CD8-positive, alpha-beta T cell (primary cell): ENCODE measurements at regions of chr10 and their contacts with region 1.

Region 1: GRCh38 chr10:62244780-62245467 is 23.7 kb downstream of the RTKN2 start:
- DNase-seq: peak in 8 of 9 experiments; percentile 10 to 80 (median 45)
- ATAC-seq: peak; percentile 88
- H3K4me3 ChIP-seq: no peak overlapping the region
- H3K4me3 Mint-ChIP-seq: no peak overlapping the region
- H3K27ac ChIP-seq: no peak overlapping the region
- H3K27ac Mint-ChIP-seq: no peak overlapping the region
- H3K4me1 ChIP-seq: peaks cover 4% of the 10 kb centered on the region
- H3K4me1 Mint-ChIP-seq: peaks cover 17% of the 10 kb centered on the region
- H3K27me3 ChIP-seq: no peaks in the 10 kb centered on the region
- H3K27me3 Mint-ChIP-seq: no peaks in the 10 kb centered on the region
- CTCF ChIP-seq: peak; percentile 90

Region 2: DNA sequence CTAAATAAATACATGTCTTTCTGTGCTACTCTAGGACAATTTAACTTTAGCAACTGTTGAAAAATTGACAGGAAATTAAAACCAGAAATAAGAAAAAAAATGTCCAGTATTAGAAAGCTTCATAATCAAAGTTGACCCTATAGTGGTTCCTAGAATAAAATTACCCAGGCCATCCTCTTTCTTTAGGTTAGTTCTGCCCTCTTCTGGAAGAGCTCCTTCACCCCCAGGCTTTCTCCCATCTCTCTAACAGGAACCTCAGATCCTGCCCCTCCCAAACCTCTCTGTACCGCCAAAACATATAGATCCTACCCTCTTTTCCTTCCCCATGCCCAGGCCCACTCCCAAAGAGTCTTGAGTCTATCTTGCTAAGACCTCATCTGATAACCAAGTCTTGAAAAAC is 1626.1 kb before region 1 on chr10:
- CTCF ChIA-PET with region 1: no interaction called
- POLR2A ChIA-PET with region 1: no interaction called
- intact Hi-C with region 1: no loop called
- DNase-seq: no peak
- ATAC-seq: no peak
- H3K4me3 ChIP-seq: no peak overlapping the region
- H3K4me3 Mint-ChIP-seq: no peak overlapping the region
- H3K27ac ChIP-seq: no peak overlapping the region
- H3K27ac Mint-ChIP-seq: no peak overlapping the region
- H3K4me1 ChIP-seq: no peaks in the 10 kb centered on the region
- H3K4me1 Mint-ChIP-seq: no peaks in the 10 kb centered on the region
- H3K27me3 ChIP-seq: no peaks in the 10 kb centered on the region
- H3K27me3 Mint-ChIP-seq: no peaks in the 10 kb centered on the region
- CTCF ChIP-seq: no peak

Region 3: GRCh38 chr10:61896854-61897661 is 347.9 kb before region 1 on chr10:
- CTCF ChIA-PET with region 1: interaction called, 60 read pairs
- POLR2A ChIA-PET with region 1: interaction called, 3 read pairs
- intact Hi-C with region 1: loop called (anchors 1 kb)
- DNase-seq: peak in 8 of 9 experiments; percentile 10 to 88 (median 52)
- ATAC-seq: peak; percentile 66
- H3K4me3 ChIP-seq: peak overlapping the region; percentile 6 to 34
- H3K4me3 Mint-ChIP-seq: peak overlapping the region; percentile 83
- H3K27ac ChIP-seq: no peak overlapping the region
- H3K27ac Mint-ChIP-seq: peak overlapping the region; percentile 69
- H3K4me1 ChIP-seq: peaks cover 20% of the 10 kb centered on the region
- H3K4me1 Mint-ChIP-seq: peaks cover 33% of the 10 kb centered on the region
- H3K27me3 ChIP-seq: no peaks in the 10 kb centered on the region
- H3K27me3 Mint-ChIP-seq: no peaks in the 10 kb centered on the region
- CTCF ChIP-seq: peak; percentile 53

Region 4: DNA sequence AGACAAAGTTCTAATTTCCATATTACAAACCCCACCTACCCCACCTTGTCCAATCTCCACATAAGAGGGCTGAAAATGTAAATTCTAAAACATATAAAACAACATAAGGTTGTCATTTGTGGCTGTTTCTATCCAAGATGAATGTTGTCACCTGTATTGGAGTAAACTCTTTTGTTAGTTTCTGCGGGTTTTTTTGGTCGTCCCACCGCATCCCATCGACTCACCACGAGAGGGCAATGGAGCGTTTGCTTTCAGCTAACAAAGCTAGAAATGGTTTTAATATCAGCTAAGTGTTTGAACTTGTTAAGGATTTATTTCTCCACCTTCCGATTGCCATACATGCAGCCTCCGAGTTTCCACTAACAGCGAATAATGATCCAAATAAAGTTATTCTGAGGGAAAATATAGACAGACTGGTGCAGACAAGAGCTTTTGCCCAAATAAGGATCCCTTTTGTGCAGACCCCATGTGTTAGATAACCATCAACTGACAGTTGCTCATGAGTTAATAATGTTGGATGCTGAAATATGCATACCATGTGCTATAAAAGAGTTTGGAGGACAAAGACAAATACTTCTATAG is 206.2 kb before region 1 on chr10:
- CTCF ChIA-PET with region 1: interaction called, 138 read pairs
- POLR2A ChIA-PET with region 1: interaction called, 10 read pairs
- intact Hi-C with region 1: loop called (anchors 1 kb)
- DNase-seq: peak; percentile 53 to 82 (median 73)
- ATAC-seq: peak; percentile 89
- H3K4me3 ChIP-seq: no peak overlapping the region
- H3K4me3 Mint-ChIP-seq: peak overlapping the region; percentile 43
- H3K27ac ChIP-seq: no peak overlapping the region
- H3K27ac Mint-ChIP-seq: no peak overlapping the region
- H3K4me1 ChIP-seq: peaks cover 10% of the 10 kb centered on the region
- H3K4me1 Mint-ChIP-seq: peaks cover 54% of the 10 kb centered on the region
- H3K27me3 ChIP-seq: no peaks in the 10 kb centered on the region
- H3K27me3 Mint-ChIP-seq: no peaks in the 10 kb centered on the region
- CTCF ChIP-seq: peak; percentile 86

Region 5: DNA sequence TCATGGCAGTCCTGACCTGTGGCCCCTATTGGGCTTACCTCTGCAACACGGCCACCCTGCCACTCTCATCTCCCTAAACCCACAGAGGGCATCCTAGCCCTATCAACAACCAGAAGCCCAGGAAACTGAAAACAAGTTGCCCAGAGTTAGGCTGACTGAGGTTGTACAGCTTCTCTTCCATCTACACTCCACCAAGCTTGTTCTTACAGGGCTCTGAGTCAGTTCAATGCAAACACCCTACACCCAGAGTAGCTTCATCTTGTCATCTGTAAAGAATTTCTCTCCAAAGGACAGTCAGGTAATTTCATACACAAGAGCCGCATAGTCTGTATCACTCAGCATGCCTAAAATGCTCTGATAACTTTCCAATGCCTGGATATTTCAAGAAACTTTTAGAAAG is 168.0 kb before region 1 on chr10:
- CTCF ChIA-PET with region 1: interaction called, 9 read pairs
- POLR2A ChIA-PET with region 1: no interaction called
- intact Hi-C with region 1: loop called in 1 of 2 experiments (anchors 1 kb)
- DNase-seq: peak in 1 of 9 experiments; percentile 30
- ATAC-seq: peak; percentile 44
- H3K4me3 ChIP-seq: no peak overlapping the region
- H3K4me3 Mint-ChIP-seq: no peak overlapping the region
- H3K27ac ChIP-seq: no peak overlapping the region
- H3K27ac Mint-ChIP-seq: peak overlapping the region; percentile 66
- H3K4me1 ChIP-seq: peaks cover 5% of the 10 kb centered on the region
- H3K4me1 Mint-ChIP-seq: peaks cover 43% of the 10 kb centered on the region
- H3K27me3 ChIP-seq: no peaks in the 10 kb centered on the region
- H3K27me3 Mint-ChIP-seq: no peaks in the 10 kb centered on the region
- CTCF ChIP-seq: no peak

Region 6: GRCh38 chr10:62109587-62110293 is 135.2 kb before region 1 on chr10:
- CTCF ChIA-PET with region 1: interaction called, 15 read pairs
- POLR2A ChIA-PET with region 1: no interaction called
- intact Hi-C with region 1: no loop called
- DNase-seq: peak in 1 of 9 experiments; percentile 12
- ATAC-seq: no peak
- H3K4me3 ChIP-seq: no peak overlapping the region
- H3K4me3 Mint-ChIP-seq: no peak overlapping the region
- H3K27ac ChIP-seq: no peak overlapping the region
- H3K27ac Mint-ChIP-seq: peak overlapping the region; percentile 16
- H3K4me1 ChIP-seq: peaks cover 20% of the 10 kb centered on the region
- H3K4me1 Mint-ChIP-seq: peaks cover 29% of the 10 kb centered on the region
- H3K27me3 ChIP-seq: no peaks in the 10 kb centered on the region
- H3K27me3 Mint-ChIP-seq: no peaks in the 10 kb centered on the region
- CTCF ChIP-seq: no peak

Region 7: GRCh38 chr10:62183442-62183841 is 61.5 kb before region 1 on chr10:
- CTCF ChIA-PET with region 1: interaction called, 5 read pairs
- POLR2A ChIA-PET with region 1: interaction called, 3 read pairs
- intact Hi-C with region 1: loop called in 1 of 2 experiments (anchors 2 kb)
- DNase-seq: peak in 7 of 9 experiments; percentile 20 to 89 (median 51)
- ATAC-seq: peak; percentile 87
- H3K4me3 ChIP-seq: no peak overlapping the region
- H3K4me3 Mint-ChIP-seq: peak overlapping the region; percentile 30
- H3K27ac ChIP-seq: peak overlapping the region; percentile 6 to 41
- H3K27ac Mint-ChIP-seq: peak overlapping the region; percentile 83
- H3K4me1 ChIP-seq: peaks cover 58% of the 10 kb centered on the region
- H3K4me1 Mint-ChIP-seq: peaks cover 75% of the 10 kb centered on the region
- H3K27me3 ChIP-seq: no peaks in the 10 kb centered on the region
- H3K27me3 Mint-ChIP-seq: no peaks in the 10 kb centered on the region
- CTCF ChIP-seq: no peak

Region 8: DNA sequence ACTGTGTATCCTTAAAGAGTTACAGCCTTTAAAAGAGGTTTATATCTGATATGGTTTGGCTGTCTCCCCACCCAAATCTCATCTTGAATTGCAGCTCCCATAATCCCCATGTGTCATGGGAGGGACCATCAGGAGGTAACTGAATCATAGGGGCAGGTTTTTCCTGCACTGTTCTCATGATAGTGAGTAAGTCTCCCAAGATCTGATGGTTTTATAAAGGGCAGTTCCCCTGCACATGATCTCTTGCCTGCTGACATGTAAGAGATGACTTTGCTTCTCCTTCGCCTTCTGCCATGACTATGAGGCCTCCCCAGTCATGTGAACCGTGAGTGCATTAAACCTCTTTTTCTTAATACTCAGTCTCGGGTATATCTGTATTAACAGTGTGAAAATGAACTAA is 14.0 kb after region 1 on chr10:
- CTCF ChIA-PET with region 1: interaction called, 7 read pairs
- POLR2A ChIA-PET with region 1: no interaction called
- intact Hi-C with region 1: loop called in 1 of 2 experiments (anchors 1 kb)
- DNase-seq: no peak
- ATAC-seq: no peak
- H3K4me3 ChIP-seq: no peak overlapping the region
- H3K4me3 Mint-ChIP-seq: no peak overlapping the region
- H3K27ac ChIP-seq: no peak overlapping the region
- H3K27ac Mint-ChIP-seq: no peak overlapping the region
- H3K4me1 ChIP-seq: no peaks in the 10 kb centered on the region
- H3K4me1 Mint-ChIP-seq: no peaks in the 10 kb centered on the region
- H3K27me3 ChIP-seq: no peaks in the 10 kb centered on the region
- H3K27me3 Mint-ChIP-seq: no peaks in the 10 kb centered on the region
- CTCF ChIP-seq: no peak

Region 9: GRCh38 chr10:62681211-62681940 is 436.5 kb after region 1 on chr10:
- CTCF ChIA-PET with region 1: no interaction called
- POLR2A ChIA-PET with region 1: no interaction called
- intact Hi-C with region 1: no loop called
- DNase-seq: peak; percentile 18 to 94 (median 57)
- ATAC-seq: peak; percentile 94
- H3K4me3 ChIP-seq: no peak overlapping the region
- H3K4me3 Mint-ChIP-seq: no peak overlapping the region
- H3K27ac ChIP-seq: peak overlapping the region in 1 of 2 experiments; percentile 20
- H3K27ac Mint-ChIP-seq: peak overlapping the region; percentile 58
- H3K4me1 ChIP-seq: peaks cover 14% of the 10 kb centered on the region
- H3K4me1 Mint-ChIP-seq: peaks cover 23% of the 10 kb centered on the region
- H3K27me3 ChIP-seq: no peaks in the 10 kb centered on the region
- H3K27me3 Mint-ChIP-seq: peaks cover 6% of the 10 kb centered on the region
- CTCF ChIP-seq: no peak